GM12878 (cell line): ENCODE measurements at regions of chr2 and their contacts with region 1.

Region 1: DNA sequence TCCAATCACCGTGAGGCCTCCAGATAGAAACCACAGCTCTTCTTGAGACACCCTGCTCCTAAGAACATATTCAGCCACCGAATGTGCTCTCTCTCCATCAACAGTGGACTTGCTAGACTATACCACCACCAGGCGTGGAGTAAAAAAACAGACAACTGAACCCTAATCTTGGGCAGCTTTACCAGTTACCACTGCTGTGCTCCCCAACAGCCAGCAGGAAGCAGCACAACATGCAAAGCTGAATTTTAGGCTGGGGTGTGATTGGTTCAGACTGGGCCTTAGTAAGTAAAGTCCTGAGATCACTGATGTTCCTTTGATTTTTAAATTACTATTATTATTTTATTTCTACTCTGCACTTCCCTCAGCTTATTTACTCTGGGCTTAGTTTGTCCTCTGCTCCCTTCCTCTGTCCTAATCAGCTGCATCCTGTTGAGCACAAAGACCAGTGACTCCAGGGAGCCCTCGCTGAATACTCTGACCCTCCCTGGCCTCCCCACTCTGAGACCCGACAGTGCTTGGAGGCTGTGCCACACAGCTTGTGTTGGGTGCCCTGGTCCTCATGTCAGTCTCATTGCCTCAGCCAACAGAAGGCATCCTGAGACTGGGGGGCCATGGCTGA is 21.9 kb downstream of the MRPL35 start:
- DNase-seq: no peak
- ATAC-seq: peak; percentile 81
- H3K4me3 ChIP-seq: no peak overlapping the region
- H3K27ac ChIP-seq: no peak overlapping the region
- H3K4me1 ChIP-seq: peaks cover 18% of the 10 kb centered on the region
- H3K27me3 ChIP-seq: no peaks in the 10 kb centered on the region
- CTCF ChIP-seq: peak; percentile 91 to 99 (median 96)
- EP300 ChIP-seq: no peak
- POLR2A ChIP-seq: no peak
- RAD21 ChIP-seq: peak; percentile 99

Region 2: DNA sequence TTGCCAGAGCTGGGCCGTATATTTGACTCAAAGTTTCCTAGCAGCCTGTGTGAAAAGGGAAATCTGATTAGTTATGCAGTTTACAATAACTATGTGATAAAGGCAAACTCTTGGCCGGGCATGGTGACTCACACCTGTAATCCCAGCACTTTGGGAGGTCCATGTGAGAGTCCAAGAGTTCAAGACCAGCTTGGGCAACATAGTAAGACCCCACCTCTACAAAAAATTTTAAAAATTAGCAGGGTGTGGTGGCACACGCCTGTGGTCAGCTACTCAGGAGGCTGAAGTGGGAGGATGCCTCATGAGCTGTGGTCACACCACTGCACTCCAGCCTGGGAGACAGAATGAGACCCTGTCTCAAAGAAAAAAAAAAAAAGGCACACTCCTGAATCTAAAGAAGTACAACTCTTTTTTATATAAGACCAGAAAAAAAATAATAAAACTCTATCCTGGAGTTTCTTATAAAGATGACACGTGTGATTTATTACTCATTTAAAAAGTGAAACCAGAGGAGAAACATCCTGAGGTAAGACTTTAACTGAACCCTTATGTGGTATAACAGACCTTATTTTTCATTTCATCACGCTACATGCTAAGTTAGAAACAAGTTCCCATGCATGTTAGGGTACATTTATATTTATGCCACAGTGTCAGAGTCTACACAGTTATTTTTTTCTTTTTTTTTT is 1282.8 kb before region 1 on chr2:
- CTCF ChIA-PET with region 1: no interaction called
- POLR2A ChIA-PET with region 1: no interaction called
- RAD21 ChIA-PET with region 1: no interaction called
- SMC1A ChIA-PET with region 1: no interaction called
- in situ Hi-C with region 1: no loop called
- intact Hi-C with region 1: no loop called
- DNase-seq: peak; percentile 82
- ATAC-seq: peak; percentile 57
- H3K4me3 ChIP-seq: no peak overlapping the region
- H3K27ac ChIP-seq: peak overlapping the region; percentile 100
- H3K4me1 ChIP-seq: peaks cover 45% of the 10 kb centered on the region
- H3K27me3 ChIP-seq: no peaks in the 10 kb centered on the region
- CTCF ChIP-seq: no peak
- EP300 ChIP-seq: peak; percentile 31 to 68; a peak in 2 of 4 replicates
- POLR2A ChIP-seq: no peak
- RAD21 ChIP-seq: no peak

Region 3: GRCh38 chr2:86195055-86195807 is 25.9 kb before region 1 on chr2 and contains the start of gene IMMT:
- CTCF ChIA-PET with region 1: interaction called, 15 read pairs
- POLR2A ChIA-PET with region 1: interaction called, 4 read pairs
- RAD21 ChIA-PET with region 1: interaction called, 3 read pairs
- SMC1A ChIA-PET with region 1: interaction called, 3 read pairs
- in situ Hi-C with region 1: no loop called
- intact Hi-C with region 1: no loop called
- DNase-seq: peak; percentile 76
- ATAC-seq: peak; percentile 96
- H3K4me3 ChIP-seq: peak within 1 kb of the TSS; percentile 95
- H3K27ac ChIP-seq: peak within 1 kb of the TSS; percentile 80
- H3K4me1 ChIP-seq: peaks cover 9% of the 10 kb centered on the region; the same call in 1 of the 2 replicates
- H3K27me3 ChIP-seq: no peaks in the 10 kb centered on the region
- CTCF ChIP-seq: no peak
- EP300 ChIP-seq: no peak
- POLR2A ChIP-seq: peak; percentile 93
- RAD21 ChIP-seq: no peak
- polyA plus RNA-seq, gene IMMT: 88.9 to 115 TPM

Region 4: DNA sequence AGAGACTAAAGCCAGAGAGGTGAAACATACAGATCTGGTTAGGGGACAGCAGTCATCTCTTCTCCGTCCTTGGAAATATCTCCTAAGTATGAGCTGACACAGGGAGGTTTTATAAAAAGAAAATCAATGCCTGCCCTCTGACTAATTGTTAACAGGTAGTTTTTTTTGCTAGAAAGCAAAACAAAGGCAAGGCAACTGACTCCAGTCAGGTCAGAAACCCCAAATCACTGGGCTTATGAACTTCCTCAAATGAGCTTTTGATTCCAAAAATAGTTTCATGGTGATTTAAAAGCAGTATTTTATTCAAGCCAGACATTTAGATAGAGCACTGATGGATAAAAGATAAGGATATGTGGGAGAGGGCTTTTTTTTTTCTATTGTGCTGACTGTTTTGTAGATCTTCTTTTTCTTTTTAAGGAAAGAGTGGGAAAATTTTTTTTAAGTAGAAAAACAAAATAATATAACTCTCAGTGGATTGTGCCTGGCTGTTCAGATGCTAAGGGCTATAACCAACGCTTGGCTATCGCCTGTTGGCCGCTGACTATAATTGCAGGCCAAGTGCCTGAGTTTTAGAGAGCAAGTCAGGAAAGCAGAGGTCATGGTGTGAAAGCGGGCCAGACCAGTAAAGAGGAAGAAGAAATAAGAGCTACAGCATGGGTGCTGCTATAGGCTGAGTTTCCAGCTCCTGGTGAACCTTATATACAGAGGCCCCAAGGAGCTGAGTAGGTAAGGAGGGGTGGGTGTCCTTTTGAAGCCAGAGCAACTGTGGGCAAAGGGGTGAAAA is 23.0 kb after region 1 on chr2:
- CTCF ChIA-PET with region 1: interaction called, 36 read pairs
- POLR2A ChIA-PET with region 1: interaction called, 3 read pairs
- RAD21 ChIA-PET with region 1: interaction called, 17 read pairs
- SMC1A ChIA-PET with region 1: interaction called, 28 read pairs
- in situ Hi-C with region 1: no loop called
- intact Hi-C with region 1: no loop called
- DNase-seq: no peak
- ATAC-seq: peak; percentile 84
- H3K4me3 ChIP-seq: no peak overlapping the region
- H3K27ac ChIP-seq: peak overlapping the region; percentile 64
- H3K4me1 ChIP-seq: peaks cover 20% of the 10 kb centered on the region
- H3K27me3 ChIP-seq: no peaks in the 10 kb centered on the region
- CTCF ChIP-seq: peak in 1 of 3 experiments; percentile 42; a peak in 2 of 6 replicates
- EP300 ChIP-seq: no peak
- POLR2A ChIP-seq: no peak
- RAD21 ChIP-seq: 0 out of 2 replicates have a peak, but pooled peaks have one; percentile 28

Region 5: GRCh38 chr2:86283411-86284030 is 62.3 kb after region 1 on chr2:
- CTCF ChIA-PET with region 1: interaction called, 11 read pairs
- POLR2A ChIA-PET with region 1: no interaction called
- RAD21 ChIA-PET with region 1: interaction called, 6 read pairs
- SMC1A ChIA-PET with region 1: interaction called, 178 read pairs
- in situ Hi-C with region 1: no loop called
- intact Hi-C with region 1: no loop called
- DNase-seq: no peak
- ATAC-seq: no peak
- H3K4me3 ChIP-seq: no peak overlapping the region
- H3K27ac ChIP-seq: no peak overlapping the region
- H3K4me1 ChIP-seq: no peaks in the 10 kb centered on the region
- H3K27me3 ChIP-seq: no peaks in the 10 kb centered on the region
- CTCF ChIP-seq: no peak
- EP300 ChIP-seq: no peak
- POLR2A ChIP-seq: no peak
- RAD21 ChIP-seq: no peak

Region 6: GRCh38 chr2:86333378-86333777 is 112.2 kb after region 1 on chr2:
- CTCF ChIA-PET with region 1: interaction called, 10 read pairs
- POLR2A ChIA-PET with region 1: no interaction called
- RAD21 ChIA-PET with region 1: interaction called, 4 read pairs
- SMC1A ChIA-PET with region 1: interaction called, 5 read pairs
- in situ Hi-C with region 1: no loop called
- intact Hi-C with region 1: no loop called
- DNase-seq: no peak
- ATAC-seq: no peak
- H3K4me3 ChIP-seq: no peak overlapping the region
- H3K27ac ChIP-seq: no peak overlapping the region
- H3K4me1 ChIP-seq: no peaks in the 10 kb centered on the region
- H3K27me3 ChIP-seq: peaks cover 14 to 20% of the 10 kb centered on the region in 2 experiments
- CTCF ChIP-seq: no peak
- EP300 ChIP-seq: no peak
- POLR2A ChIP-seq: no peak
- RAD21 ChIP-seq: no peak

Region 7: DNA sequence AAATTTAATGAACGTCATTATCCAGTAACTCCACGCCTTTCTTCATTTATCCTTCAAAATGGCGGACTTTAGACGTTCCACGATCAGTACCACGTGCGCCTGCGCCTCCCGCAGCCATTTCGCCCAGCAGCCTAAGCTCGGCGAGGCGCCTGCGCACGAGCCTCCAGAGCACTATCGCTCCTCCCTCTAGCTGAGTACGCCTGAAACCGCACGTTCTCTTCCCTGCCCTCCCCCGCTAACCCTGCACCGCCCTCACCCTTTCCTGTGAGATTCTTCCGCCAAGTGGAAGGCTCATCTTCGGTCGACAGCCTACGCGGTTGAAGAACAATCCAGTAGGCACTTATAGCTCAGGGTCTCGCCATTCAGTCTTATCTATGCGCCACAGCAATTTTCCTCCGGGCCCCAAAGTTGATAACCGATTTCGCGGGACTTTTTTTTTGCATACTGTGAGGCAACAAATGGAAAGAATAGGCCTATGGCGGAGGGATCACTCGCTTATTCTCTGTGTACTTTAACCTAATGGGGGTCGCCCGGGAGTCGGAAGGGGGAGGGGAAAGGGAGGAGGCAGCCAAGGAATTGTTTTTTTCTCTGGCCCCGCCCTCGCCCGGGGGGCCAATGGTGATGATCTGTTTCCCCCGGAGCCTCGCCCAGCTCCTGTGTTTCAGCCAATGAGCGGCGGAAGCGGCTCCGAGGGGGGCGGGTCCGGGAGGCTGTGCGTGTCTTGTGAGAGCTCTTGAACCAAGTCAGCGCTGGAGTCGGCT is 219.6 kb after region 1 on chr2 and contains the start of gene KDM3A:
- CTCF ChIA-PET with region 1: interaction called, 15 read pairs
- POLR2A ChIA-PET with region 1: interaction called, 4 read pairs
- RAD21 ChIA-PET with region 1: interaction called, 8 read pairs
- SMC1A ChIA-PET with region 1: interaction called, 13 read pairs
- in situ Hi-C with region 1: no loop called
- intact Hi-C with region 1: loop called (anchors 10 kb)
- DNase-seq: peak; percentile 97
- ATAC-seq: peak; percentile 91
- H3K4me3 ChIP-seq: peak within 1 kb of the TSS; percentile 78
- H3K27ac ChIP-seq: peak within 1 kb of the TSS; percentile 100
- H3K4me1 ChIP-seq: peaks cover 11% of the 10 kb centered on the region
- H3K27me3 ChIP-seq: no peaks in the 10 kb centered on the region
- CTCF ChIP-seq: no peak
- EP300 ChIP-seq: peak in 1 of 2 experiments; percentile 17; a peak in 3 of 4 replicates
- POLR2A ChIP-seq: no peak
- RAD21 ChIP-seq: 0 out of 2 replicates have a peak, but pooled peaks have one; percentile 4
- polyA plus RNA-seq, gene KDM3A: 3.8 to 4.9 TPM